ENCODE measurements at regions of chr11 and their contacts with region 1.

Region 1: GRCh38 chr11:92159931-92160330 is 64.7 kb upstream of the FAT3 start:
- DNase-seq: no peak
- H3K4me3 ChIP-seq: no peak overlapping the region
- H3K27ac ChIP-seq: no peak overlapping the region
- H3K4me1 ChIP-seq: no peaks in the 10 kb centered on the region
- H3K27me3 ChIP-seq: no peaks in the 10 kb centered on the region
- CTCF ChIP-seq: no peak
- EP300 ChIP-seq: no peak
- POLR2A ChIP-seq: no peak

Region 2: GRCh38 chr11:92111287-92111686 is 48.6 kb before region 1 on chr11:
- intact Hi-C with region 1: loop called in 1 of 4 experiments (anchors 1 kb)
- DNase-seq: no peak
- H3K4me3 ChIP-seq: no peak overlapping the region
- H3K27ac ChIP-seq: no peak overlapping the region
- H3K4me1 ChIP-seq: no peaks in the 10 kb centered on the region
- H3K27me3 ChIP-seq: no peaks in the 10 kb centered on the region
- CTCF ChIP-seq: no peak
- EP300 ChIP-seq: no peak
- POLR2A ChIP-seq: no peak

Region 3: DNA sequence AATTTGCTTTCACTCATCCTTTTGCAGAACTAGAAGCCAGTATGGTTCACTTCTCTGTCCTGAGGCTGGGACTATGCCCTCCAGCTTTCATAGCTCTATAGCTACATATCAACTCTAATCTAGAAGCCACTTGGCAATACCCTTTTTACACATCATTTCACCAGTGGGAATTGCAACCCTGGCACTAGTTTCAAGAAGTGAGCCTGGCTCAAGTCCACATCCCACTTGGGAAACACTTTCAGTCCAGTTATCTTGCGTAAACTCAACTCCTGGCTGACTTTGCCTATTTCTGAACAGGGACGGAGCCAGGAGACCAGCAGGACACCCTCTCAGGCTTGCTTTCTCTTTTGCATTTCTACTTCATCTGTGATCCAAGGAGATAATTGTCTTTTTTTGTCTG is 44.8 kb after region 1 on chr11:
- intact Hi-C with region 1: no loop called
- DNase-seq: no peak
- H3K4me3 ChIP-seq: no peak overlapping the region
- H3K27ac ChIP-seq: no peak overlapping the region
- H3K4me1 ChIP-seq: no peaks in the 10 kb centered on the region
- H3K27me3 ChIP-seq: no peaks in the 10 kb centered on the region
- CTCF ChIP-seq: no peak
- EP300 ChIP-seq: no peak
- POLR2A ChIP-seq: no peak